ENCODE measurements at regions of chr12 and their contacts with region 1.

Region 1: DNA sequence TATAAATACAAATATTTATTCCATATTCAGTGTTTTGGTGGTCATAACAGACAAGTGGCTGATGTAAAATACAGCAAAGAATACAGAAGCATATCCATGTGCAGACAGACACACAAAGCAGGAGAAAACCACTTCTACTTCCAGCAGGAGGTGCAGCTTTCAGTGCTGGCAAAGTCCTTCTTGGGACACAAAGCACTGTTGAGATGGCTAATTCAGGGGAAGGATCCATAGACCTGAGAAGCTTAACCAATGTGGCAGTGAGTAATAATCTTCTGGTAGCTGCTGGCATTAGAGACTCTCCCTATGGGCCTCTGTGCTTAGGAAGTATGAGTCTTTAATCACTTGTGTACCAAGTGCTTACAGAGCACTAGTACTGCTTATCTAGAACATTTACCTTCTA is 26.8 kb downstream of the AMN1 start:
- DNase-seq: no peak
- ATAC-seq: peak; percentile 61
- H3K4me3 ChIP-seq: no peak overlapping the region
- H3K27ac ChIP-seq: no peak overlapping the region
- H3K4me1 ChIP-seq: no peaks in the 10 kb centered on the region
- H3K27me3 ChIP-seq: no peaks in the 10 kb centered on the region
- CTCF ChIP-seq: peak in 2 of 3 experiments; percentile 5 to 33; a peak in 2 of 6 replicates
- EP300 ChIP-seq: no peak
- POLR2A ChIP-seq: no peak
- RAD21 ChIP-seq: peak in 1 of 2 experiments; percentile 48; a peak in 2 of 4 replicates

Region 2: GRCh38 chr12:31715283-31715825 is 13.3 kb after region 1 on chr12:
- CTCF ChIA-PET with region 1: no interaction called
- POLR2A ChIA-PET with region 1: interaction called, 10 read pairs
- in situ Hi-C with region 1: no loop called
- intact Hi-C with region 1: no loop called
- DNase-seq: peak; percentile 62 to 94 (median 73)
- ATAC-seq: peak; percentile 86
- H3K4me3 ChIP-seq: peak overlapping the region; percentile 49
- H3K27ac ChIP-seq: peak overlapping the region; percentile 97
- H3K4me1 ChIP-seq: peaks cover 8 to 21% of the 10 kb centered on the region in 2 experiments; a peak in 4 of 5 replicates
- H3K27me3 ChIP-seq: no peaks in the 10 kb centered on the region
- CTCF ChIP-seq: no peak
- EP300 ChIP-seq: peak; percentile 93
- POLR2A ChIP-seq: peak; percentile 90
- RAD21 ChIP-seq: peak in 1 of 2 experiments; percentile 34; a peak in 3 of 4 replicates